ENCODE measurements at regions of chr15 and their contacts with region 1.

Region 1: GRCh38 chr15:90648137-90649070 is 68.7 kb upstream of the BLM start:
- DNase-seq: no peak
- H3K4me3 ChIP-seq: no peak overlapping the region
- H3K27ac ChIP-seq: peak overlapping the region; percentile 32 to 72 (median 52)
- H3K4me1 ChIP-seq: peaks cover 12 to 20% (median 14%) of the 10 kb centered on the region in 4 donors
- H3K27me3 ChIP-seq: peaks cover 0 to 11% (median 0%) of the 10 kb centered on the region in 4 donors
- CTCF ChIP-seq: peak; percentile 88 to 91 (median 89)
- EP300 ChIP-seq: no peak
- POLR2A ChIP-seq: no peak

Region 2: DNA sequence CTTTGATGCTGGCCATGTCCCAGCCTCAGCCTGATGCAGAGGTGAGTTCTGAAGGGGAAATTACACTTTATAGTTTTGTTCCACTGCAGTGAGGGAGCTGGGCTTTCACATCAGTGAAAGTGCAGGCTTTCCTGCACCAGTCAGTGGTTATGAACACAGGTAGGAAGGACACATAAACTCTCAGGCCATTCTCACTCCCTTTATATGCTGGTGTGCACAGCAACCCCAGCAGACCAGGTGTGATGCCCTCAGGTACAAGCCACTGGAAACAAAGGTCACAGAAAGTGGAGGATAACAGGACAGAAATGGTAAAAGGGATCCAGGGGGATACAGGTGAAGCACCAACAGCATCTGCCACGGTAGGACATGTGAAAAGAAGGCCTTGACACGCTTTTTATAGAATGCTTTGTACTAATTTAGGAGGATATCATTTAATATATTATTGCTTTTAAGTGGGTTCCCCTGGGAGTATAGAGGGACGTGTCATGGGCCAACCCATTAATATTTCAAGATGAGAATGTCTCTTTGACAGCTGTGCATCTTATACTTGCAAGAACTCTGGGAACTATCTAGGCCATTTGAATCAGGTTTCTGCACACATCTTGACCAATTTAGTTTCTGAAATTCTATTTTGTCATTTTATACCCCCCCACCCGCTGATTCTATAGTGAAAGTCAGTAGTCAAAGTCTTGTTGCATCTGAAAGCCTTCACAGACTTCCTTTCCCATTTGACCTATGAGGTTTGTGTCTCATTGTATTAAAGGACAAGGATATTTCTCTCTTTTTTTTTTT is 43.8 kb after region 1 on chr15:
- intact Hi-C with region 1: loop called (anchors 5 kb)
- DNase-seq: no peak
- H3K4me3 ChIP-seq: no peak overlapping the region
- H3K27ac ChIP-seq: no peak overlapping the region
- H3K4me1 ChIP-seq: no peaks in the 10 kb centered on the region
- H3K27me3 ChIP-seq: no peaks in the 10 kb centered on the region
- CTCF ChIP-seq: no peak
- EP300 ChIP-seq: no peak
- POLR2A ChIP-seq: no peak

Region 3: DNA sequence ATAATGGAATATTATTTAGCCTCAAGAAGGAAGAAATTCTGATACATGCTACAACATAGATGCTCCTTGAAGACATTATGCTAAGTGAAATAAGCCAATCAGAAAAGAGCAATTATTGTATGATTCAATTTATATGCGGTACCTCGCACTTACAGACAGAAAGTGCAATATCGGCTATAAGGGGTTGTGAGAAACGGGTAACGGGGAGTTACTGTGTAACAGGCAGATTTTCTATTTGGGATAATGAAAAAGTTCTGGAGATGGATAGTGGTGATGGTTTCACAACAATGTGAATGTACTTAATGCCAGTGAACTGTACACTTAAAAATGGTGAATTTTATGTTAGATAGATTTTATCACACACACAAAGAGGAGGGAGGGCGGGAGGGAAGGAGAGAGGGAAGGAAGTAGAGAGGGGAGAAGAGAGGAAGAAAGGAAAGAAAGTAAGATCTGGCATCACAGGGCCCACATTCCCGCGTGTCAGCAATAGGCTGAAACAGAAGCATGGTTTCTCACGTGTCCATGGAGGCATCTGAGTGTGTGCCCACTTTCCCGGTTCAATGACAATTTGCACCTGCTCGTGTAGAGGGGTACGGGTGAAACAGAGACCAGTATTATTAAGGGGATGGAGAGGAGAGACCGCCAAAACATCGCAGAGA is 68.0 kb after region 1 on chr15:
- intact Hi-C with region 1: no loop called
- DNase-seq: no peak
- H3K4me3 ChIP-seq: peak overlapping the region; percentile 65 to 74 (median 69)
- H3K27ac ChIP-seq: peak overlapping the region; percentile 84 to 94 (median 92)
- H3K4me1 ChIP-seq: peaks cover 5 to 17% (median 16%) of the 10 kb centered on the region in 4 donors
- H3K27me3 ChIP-seq: no peaks in the 10 kb centered on the region
- CTCF ChIP-seq: no peak
- EP300 ChIP-seq: no peak
- POLR2A ChIP-seq: no peak

Region 4: GRCh38 chr15:90886041-90886614 is 237.7 kb after region 1 on chr15:
- intact Hi-C with region 1: loop called (anchors 2 kb)
- DNase-seq: peak; percentile 96
- H3K4me3 ChIP-seq: peak overlapping the region; percentile 59 to 71 (median 64)
- H3K27ac ChIP-seq: peak overlapping the region; percentile 90 to 93 (median 92)
- H3K4me1 ChIP-seq: peaks cover 32 to 50% (median 48%) of the 10 kb centered on the region in 4 donors
- H3K27me3 ChIP-seq: no peaks in the 10 kb centered on the region
- CTCF ChIP-seq: peak in 2 of 3 experiments; percentile 95 to 97
- EP300 ChIP-seq: no peak
- POLR2A ChIP-seq: no peak